ENCODE measurements at regions of chr4 and their contacts with region 1.

Region 1: DNA sequence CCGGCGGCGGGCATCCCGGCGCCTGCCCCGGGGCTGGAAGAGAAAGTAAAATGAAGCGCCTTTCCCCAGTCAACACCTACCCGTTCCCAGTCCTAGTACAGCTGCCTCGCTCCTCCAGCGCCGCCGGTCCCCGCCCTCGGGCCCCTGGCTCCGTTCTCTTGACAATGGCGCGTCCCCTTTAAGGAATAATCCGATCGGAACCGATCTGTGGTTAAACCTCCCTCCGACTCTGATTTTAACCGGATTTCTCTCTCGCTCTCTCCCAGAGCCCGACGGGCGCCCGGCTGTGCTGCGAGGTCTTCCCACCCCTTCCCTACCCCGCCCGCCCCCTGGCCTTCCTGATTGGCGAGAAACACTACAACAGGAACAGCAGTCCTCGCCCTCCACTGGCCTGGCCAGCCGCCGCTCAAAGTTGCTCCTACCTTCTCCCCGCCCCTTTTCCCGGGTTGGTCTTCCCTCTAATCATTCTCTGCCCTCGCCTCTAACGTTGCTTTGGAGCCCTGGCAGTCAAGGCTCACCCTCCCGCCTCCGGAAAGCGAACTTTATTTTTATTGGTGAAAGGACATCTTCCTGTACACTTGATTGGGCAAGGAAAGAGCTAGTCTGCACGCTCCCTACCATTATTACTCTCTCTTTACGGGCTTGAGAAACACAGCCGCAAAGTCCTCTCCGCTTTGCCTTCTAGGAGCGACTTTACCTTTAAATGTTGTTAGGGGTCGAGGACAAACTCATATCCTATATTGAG is at the start of gene FRYL:
- DNase-seq: peak; percentile 100
- H3K4me3 ChIP-seq: peak within 1 kb of the TSS; percentile 98
- H3K27ac ChIP-seq: peak within 1 kb of the TSS; percentile 99
- H3K4me1 ChIP-seq: peaks cover 6% of the 10 kb centered on the region
- H3K27me3 ChIP-seq: no peaks in the 10 kb centered on the region
- CTCF ChIP-seq: no peak
- total RNA-seq, gene FRYL: 193 to 292 TPM

Region 2: DNA sequence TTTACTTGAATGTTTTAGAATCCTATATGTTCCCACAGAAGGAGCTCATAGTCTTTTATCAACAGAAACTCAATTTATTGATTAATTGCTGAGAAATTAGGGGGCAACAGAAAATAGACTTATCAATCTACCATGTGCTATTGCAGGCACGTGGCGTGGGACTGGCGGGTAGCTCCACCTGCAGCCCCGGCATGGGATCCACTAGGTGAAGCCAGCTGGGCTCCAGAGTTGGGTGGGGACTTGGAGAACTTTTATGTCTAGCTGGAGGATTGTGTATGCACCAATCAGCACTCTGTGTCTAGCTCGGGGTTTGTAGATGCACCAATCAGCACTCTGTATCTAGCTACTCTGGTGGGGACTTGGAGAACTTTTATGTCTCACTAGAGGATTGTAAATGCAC is 47.5 kb after region 1 on chr4:
- intact Hi-C with region 1: loop called (anchors 2 kb)
- DNase-seq: no peak
- H3K4me3 ChIP-seq: no peak overlapping the region
- H3K27ac ChIP-seq: no peak overlapping the region
- H3K4me1 ChIP-seq: no peaks in the 10 kb centered on the region
- H3K27me3 ChIP-seq: no peaks in the 10 kb centered on the region
- CTCF ChIP-seq: no peak

Region 3: DNA sequence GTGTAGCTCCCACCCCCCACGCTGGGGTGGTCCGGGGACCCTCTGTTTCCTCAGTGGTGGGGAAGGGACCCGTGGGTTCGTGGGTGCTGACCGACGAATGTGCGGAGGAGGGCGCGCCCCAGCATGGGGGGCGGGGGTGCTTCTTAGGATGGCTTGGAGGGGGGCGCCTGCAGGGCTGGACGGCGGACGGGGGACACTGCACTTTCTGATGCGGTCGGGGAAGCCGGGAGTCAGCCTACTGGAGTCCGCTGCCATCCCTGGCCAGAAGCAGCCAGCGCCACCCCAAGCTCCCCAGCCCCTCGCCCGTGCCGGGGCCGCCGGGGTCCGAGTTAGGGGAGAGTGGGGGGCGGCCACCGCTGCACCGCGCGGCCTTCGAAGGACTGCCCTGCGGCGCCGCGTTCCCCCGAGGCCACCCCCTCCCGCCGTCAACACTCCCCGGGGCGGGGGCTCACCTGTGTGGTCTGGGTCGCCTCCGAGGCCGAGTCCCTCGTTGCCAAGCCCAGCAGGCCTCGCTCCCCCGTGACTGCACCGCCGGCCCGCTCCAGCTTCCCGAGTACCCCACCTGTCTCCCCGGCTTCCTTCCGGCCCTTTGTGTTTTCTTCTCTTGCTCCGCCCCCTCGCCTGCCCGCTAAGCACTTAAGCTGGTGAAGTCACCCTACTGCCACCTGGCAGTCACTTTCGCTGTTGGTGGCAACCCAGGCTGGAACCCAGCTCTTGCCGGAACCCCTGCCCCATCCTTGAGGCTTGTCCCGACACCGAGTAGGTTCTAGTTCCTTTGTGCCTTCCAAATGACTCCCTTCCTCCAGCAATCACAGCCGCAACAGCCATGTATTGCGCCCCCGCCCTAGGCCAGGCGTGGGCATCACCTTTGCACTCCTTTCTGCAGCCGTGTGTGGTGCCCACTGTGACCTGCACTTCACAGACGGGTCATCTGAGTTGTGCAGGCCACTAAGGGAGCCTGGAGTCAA is 126.3 kb after region 1 on chr4 and contains the start of gene OCIAD2:
- intact Hi-C with region 1: loop called (anchors 10 kb)
- DNase-seq: peak; percentile 89
- H3K4me3 ChIP-seq: peak within 1 kb of the TSS; percentile 93
- H3K27ac ChIP-seq: peak within 1 kb of the TSS; percentile 71
- H3K4me1 ChIP-seq: no peaks in the 10 kb centered on the region
- H3K27me3 ChIP-seq: no peaks in the 10 kb centered on the region
- CTCF ChIP-seq: peak; percentile 23
- total RNA-seq, gene OCIAD2: 55.7 to 124 TPM

Measured in colonic mucosa (tissue), 4 donors.